K562 (cell line): ENCODE measurements at regions of chr1 and their contacts with region 1.

Region 1: DNA sequence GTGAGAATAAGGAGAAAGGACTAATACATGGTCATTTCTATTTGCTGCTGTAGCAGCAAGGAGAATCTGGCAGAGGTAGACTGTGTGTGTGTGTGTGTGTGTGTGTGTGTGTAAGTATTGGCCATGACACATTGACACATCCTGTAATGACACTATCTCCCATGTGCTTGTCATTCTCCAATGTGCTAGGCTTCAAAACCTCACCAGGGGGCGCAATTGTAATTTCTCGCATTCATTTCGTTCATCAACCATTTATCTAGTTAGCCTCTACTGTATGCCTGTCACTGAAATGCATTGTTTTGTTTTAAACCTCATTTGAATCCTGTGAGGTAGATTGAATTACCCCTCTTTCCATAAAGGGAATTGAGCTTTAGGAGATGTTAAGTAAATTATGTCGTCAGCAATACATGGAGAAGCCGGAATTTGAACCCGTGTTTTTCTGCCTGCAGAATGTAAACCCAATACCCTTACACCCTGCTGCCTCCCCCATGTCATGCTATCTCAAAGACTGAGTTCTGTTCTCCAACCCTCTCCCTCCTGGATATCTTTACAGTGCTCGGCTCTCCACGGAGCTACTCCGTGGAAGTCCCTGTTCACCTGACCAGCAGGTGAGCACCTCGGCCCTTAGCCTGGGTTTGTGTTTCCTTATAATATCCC is 100.8 kb downstream of the UCK2 start:
- DNase-seq: peak; percentile 70 to 78 (median 77)
- ATAC-seq: peak; percentile 69
- H3K4me3 ChIP-seq: no peak overlapping the region
- H3K27ac ChIP-seq: no peak overlapping the region
- H3K4me1 ChIP-seq: peaks cover 5 to 7% of the 10 kb centered on the region in 2 experiments; a peak in 3 of 5 replicates
- H3K27me3 ChIP-seq: no peaks in the 10 kb centered on the region
- CTCF ChIP-seq: peak; percentile 76 to 84 (median 84)
- EP300 ChIP-seq: no peak
- POLR2A ChIP-seq: no peak
- RAD21 ChIP-seq: peak; percentile 72 to 90

Region 2: DNA sequence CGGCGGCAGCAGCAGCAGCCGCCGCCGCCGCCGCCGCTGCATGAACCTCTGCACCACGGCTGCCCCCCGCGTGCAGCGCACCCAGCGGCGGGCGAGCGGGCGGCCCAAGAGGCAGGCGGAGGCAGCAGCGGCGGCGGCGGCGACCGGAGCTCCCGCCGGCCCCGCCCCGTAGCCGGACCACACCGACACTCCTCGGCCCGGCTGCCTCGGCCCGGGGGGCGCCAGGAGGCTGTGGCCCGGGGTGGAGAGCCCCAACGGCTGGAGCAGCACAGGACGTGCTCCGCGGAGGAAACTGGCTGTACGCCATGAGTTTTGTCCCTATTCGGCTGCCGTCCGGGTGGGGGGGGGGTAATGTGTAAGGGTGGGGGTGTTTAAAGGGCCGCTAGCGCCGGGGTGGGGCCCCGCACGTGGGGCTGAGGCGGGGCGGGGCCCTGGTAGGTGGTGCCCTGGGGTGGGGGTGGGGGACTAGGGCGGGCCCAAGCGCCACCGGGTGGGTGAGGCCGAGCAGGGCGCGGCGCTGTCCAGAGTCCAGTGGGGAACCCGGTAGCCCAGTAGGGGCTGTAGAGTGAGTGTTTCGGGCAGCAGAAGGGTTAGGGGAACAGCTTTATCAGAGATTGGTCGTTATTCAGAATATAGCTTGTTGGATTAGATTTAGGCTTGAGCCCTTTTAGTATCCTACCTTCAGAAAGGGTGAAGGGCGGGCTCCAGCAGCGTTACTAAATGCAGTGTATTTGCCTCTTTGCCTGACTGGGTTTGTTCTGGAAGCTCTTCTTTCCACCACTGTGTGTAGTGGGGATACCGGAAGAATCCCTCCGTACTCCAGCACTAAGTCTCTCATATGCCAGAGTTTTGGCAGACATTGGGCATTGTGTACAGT is 238.7 kb after region 1 on chr1 and contains the start of gene FAM78B:
- CTCF ChIA-PET with region 1: no interaction called
- POLR2A ChIA-PET with region 1: no interaction called
- in situ Hi-C with region 1: no loop called
- intact Hi-C with region 1: loop called (anchors 5 kb)
- DNase-seq: peak; percentile 91 to 99 (median 98)
- ATAC-seq: peak; percentile 97
- H3K4me3 ChIP-seq: peak within 1 kb of the TSS; percentile 66
- H3K27ac ChIP-seq: no peak within 1 kb of the TSS
- H3K4me1 ChIP-seq: peaks cover 7 to 21% of the 10 kb centered on the region in 2 experiments; a peak in 4 of 5 replicates
- H3K27me3 ChIP-seq: peaks cover 22 to 25% of the 10 kb centered on the region in 2 experiments; a peak in 4 of 5 replicates
- CTCF ChIP-seq: peak; percentile 8 to 56 (median 18); a peak in 4 of 6 replicates
- EP300 ChIP-seq: no peak
- POLR2A ChIP-seq: no peak
- RAD21 ChIP-seq: no peak
- polyA plus RNA-seq, gene FAM78B: 0.04 TPM in 1 of 2 experiments, not detected in the other

Region 3: DNA sequence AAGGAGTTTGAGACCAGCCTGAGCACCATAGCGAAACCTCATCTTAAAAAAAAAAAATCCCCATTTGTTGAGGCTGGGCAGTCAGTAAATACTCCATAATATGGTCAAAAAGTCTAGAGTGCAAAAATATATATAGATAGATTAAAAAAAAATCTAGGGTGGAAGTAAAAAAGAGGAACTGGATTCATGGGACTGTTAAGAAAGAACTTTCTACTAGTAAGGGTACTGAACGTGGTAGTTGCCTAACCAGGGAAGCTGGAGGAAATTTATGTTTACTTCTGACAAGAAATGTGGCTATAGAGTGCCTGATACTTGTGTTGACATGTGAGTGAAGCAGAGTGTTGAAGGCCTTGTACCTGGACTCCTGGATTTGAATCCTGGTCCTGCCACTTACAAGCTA is 504.5 kb after region 1 on chr1:
- CTCF ChIA-PET with region 1: interaction called, 3 read pairs
- POLR2A ChIA-PET with region 1: interaction called, 6 read pairs
- in situ Hi-C with region 1: no loop called
- intact Hi-C with region 1: loop called (anchors 1 kb)
- DNase-seq: no peak
- ATAC-seq: no peak
- H3K4me3 ChIP-seq: no peak overlapping the region
- H3K27ac ChIP-seq: no peak overlapping the region
- H3K4me1 ChIP-seq: no peaks in the 10 kb centered on the region
- H3K27me3 ChIP-seq: peaks cover 0 to 6% of the 10 kb centered on the region in 2 experiments; a peak in 1 of 5 replicates
- CTCF ChIP-seq: no peak
- EP300 ChIP-seq: no peak
- POLR2A ChIP-seq: no peak
- RAD21 ChIP-seq: no peak

Region 4: GRCh38 chr1:166730299-166730888 is 802.2 kb after region 1 on chr1:
- CTCF ChIA-PET with region 1: no interaction called
- POLR2A ChIA-PET with region 1: no interaction called
- in situ Hi-C with region 1: no loop called
- intact Hi-C with region 1: loop called (anchors 1 kb)
- DNase-seq: peak; percentile 31 to 91 (median 66)
- ATAC-seq: peak; percentile 100
- H3K4me3 ChIP-seq: no peak overlapping the region
- H3K27ac ChIP-seq: peak overlapping the region; percentile 43
- H3K4me1 ChIP-seq: peaks cover 9 to 11% of the 10 kb centered on the region in 2 experiments; a peak in 4 of 5 replicates
- H3K27me3 ChIP-seq: no peaks in the 10 kb centered on the region
- CTCF ChIP-seq: peak; percentile 62 to 83 (median 64)
- EP300 ChIP-seq: no peak
- POLR2A ChIP-seq: no peak
- RAD21 ChIP-seq: peak; percentile 86 to 92